Endothelial cell of umbilical vein (primary cell): ENCODE measurements at regions of chr3 and their contacts with region 1.

Region 1: GRCh38 chr3:12984023-12984823 is 89.0 kb downstream of the IQSEC1 start:
- DNase-seq: peak; percentile 77
- H3K4me3 ChIP-seq: no peak overlapping the region
- H3K27ac ChIP-seq: no peak overlapping the region
- H3K4me1 ChIP-seq: no peaks in the 10 kb centered on the region
- H3K27me3 ChIP-seq: peaks cover 3 to 11% of the 10 kb centered on the region in 2 experiments
- CTCF ChIP-seq: peak; percentile 76 to 86
- POLR2A ChIP-seq: no peak

Region 2: GRCh38 chr3:12815719-12816118 is 168.5 kb before region 1 on chr3:
- CTCF ChIA-PET with region 1: no interaction called
- POLR2A ChIA-PET with region 1: no interaction called
- dilution Hi-C with region 1: no loop called
- intact Hi-C with region 1: no loop called
- DNase-seq: no peak
- H3K4me3 ChIP-seq: no peak overlapping the region
- H3K27ac ChIP-seq: no peak overlapping the region
- H3K4me1 ChIP-seq: peaks cover under 1% of the 10 kb centered on the region
- H3K27me3 ChIP-seq: no peaks in the 10 kb centered on the region
- CTCF ChIP-seq: no peak
- POLR2A ChIP-seq: no peak

Region 3: GRCh38 chr3:12868039-12869034 is 115.9 kb before region 1 on chr3:
- CTCF ChIA-PET with region 1: interaction called, 101 read pairs
- POLR2A ChIA-PET with region 1: no interaction called
- dilution Hi-C with region 1: no loop called
- intact Hi-C with region 1: loop called (anchors 1 kb)
- DNase-seq: peak; percentile 83
- H3K4me3 ChIP-seq: peak overlapping the region in 1 of 3 experiments; percentile 4
- H3K27ac ChIP-seq: no peak overlapping the region
- H3K4me1 ChIP-seq: no peaks in the 10 kb centered on the region
- H3K27me3 ChIP-seq: no peaks in the 10 kb centered on the region
- CTCF ChIP-seq: peak; percentile 72 to 90
- POLR2A ChIP-seq: no peak

Region 4: GRCh38 chr3:12901623-12902045 is 82.6 kb before region 1 on chr3:
- CTCF ChIA-PET with region 1: interaction called, 12 read pairs
- POLR2A ChIA-PET with region 1: no interaction called
- dilution Hi-C with region 1: no loop called
- intact Hi-C with region 1: loop called (anchors 1 kb)
- DNase-seq: no peak
- H3K4me3 ChIP-seq: no peak overlapping the region
- H3K27ac ChIP-seq: no peak overlapping the region
- H3K4me1 ChIP-seq: no peaks in the 10 kb centered on the region
- H3K27me3 ChIP-seq: no peaks in the 10 kb centered on the region
- CTCF ChIP-seq: no peak
- POLR2A ChIP-seq: no peak

Region 5: GRCh38 chr3:12948891-12949711 is 35.1 kb before region 1 on chr3:
- CTCF ChIA-PET with region 1: interaction called, 39 read pairs
- POLR2A ChIA-PET with region 1: no interaction called
- dilution Hi-C with region 1: no loop called
- intact Hi-C with region 1: loop called (anchors 2 kb)
- DNase-seq: peak; percentile 45
- H3K4me3 ChIP-seq: no peak overlapping the region
- H3K27ac ChIP-seq: no peak overlapping the region
- H3K4me1 ChIP-seq: peaks cover 15% of the 10 kb centered on the region
- H3K27me3 ChIP-seq: no peaks in the 10 kb centered on the region
- CTCF ChIP-seq: peak in 1 of 2 donors; percentile 22
- POLR2A ChIP-seq: no peak

Region 6: GRCh38 chr3:12967606-12968351 is 16.4 kb before region 1 on chr3:
- CTCF ChIA-PET with region 1: interaction called, 48 read pairs
- POLR2A ChIA-PET with region 1: interaction called, 4 read pairs
- dilution Hi-C with region 1: no loop called
- intact Hi-C with region 1: no loop called
- DNase-seq: peak; percentile 69
- H3K4me3 ChIP-seq: peak overlapping the region; percentile 70 to 92 (median 72)
- H3K27ac ChIP-seq: no peak overlapping the region
- H3K4me1 ChIP-seq: peaks cover 30% of the 10 kb centered on the region
- H3K27me3 ChIP-seq: peaks cover 11 to 14% of the 10 kb centered on the region in 2 experiments
- CTCF ChIP-seq: no peak
- POLR2A ChIP-seq: peak; percentile 52

Region 7: DNA sequence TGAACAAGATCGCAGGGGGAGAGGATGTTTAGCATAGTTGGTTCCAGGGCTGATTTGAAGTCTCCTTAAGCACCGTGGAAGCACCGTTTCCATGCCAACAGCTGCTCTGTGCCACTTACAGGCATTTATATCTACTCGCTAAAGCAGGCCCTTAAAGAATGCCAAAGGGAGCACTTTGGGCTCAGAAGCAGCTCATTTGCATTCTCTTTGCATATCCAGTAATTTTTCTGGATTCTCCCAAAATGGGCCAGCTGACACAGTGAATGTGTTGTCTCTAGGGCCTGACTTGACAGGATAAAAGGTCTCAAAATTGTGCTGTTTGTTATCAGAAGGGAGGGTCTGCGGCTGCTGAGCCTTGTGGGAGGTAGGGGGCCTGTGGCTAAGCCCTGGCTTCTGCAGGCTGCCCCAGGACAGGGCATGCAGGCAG is 703.3 kb after region 1 on chr3:
- CTCF ChIA-PET with region 1: no interaction called
- POLR2A ChIA-PET with region 1: no interaction called
- dilution Hi-C with region 1: no loop called
- intact Hi-C with region 1: no loop called
- DNase-seq: no peak
- H3K4me3 ChIP-seq: no peak overlapping the region
- H3K27ac ChIP-seq: no peak overlapping the region
- H3K4me1 ChIP-seq: no peaks in the 10 kb centered on the region
- H3K27me3 ChIP-seq: no peaks in the 10 kb centered on the region
- CTCF ChIP-seq: no peak
- POLR2A ChIP-seq: no peak

Region 8: DNA sequence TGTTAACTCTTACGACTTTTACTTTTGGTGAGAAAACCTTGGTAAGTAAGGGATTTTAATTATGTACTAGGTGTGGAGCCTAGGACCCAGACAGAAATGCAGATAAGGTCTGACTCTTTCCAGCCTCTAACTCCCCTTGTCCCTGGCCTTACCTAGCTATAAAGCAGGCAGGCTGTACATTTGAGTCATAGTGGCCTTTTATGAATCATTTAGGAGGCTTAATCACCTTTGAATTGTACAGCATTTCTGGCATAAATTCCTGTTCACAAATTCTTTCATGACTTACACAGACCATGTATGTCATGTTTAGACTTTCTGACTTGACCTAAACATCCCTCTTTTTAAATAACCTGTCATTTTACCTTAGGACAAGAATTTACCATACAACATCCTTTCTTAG is 1093.1 kb after region 1 on chr3:
- CTCF ChIA-PET with region 1: no interaction called
- POLR2A ChIA-PET with region 1: no interaction called
- dilution Hi-C with region 1: no loop called
- intact Hi-C with region 1: no loop called
- DNase-seq: no peak
- H3K4me3 ChIP-seq: no peak overlapping the region
- H3K27ac ChIP-seq: no peak overlapping the region
- H3K4me1 ChIP-seq: no peaks in the 10 kb centered on the region
- H3K27me3 ChIP-seq: no peaks in the 10 kb centered on the region
- CTCF ChIP-seq: no peak
- POLR2A ChIP-seq: no peak